ENCODE measurements at regions of chr4 and their contacts with region 1.

Region 1: GRCh38 chr4:98688411-98689290 is 30.2 kb upstream of the TSPAN5 start:
- DNase-seq: peak; percentile 63
- H3K4me3 Mint-ChIP-seq: no peak overlapping the region
- H3K27ac Mint-ChIP-seq: peak overlapping the region; percentile 72
- H3K4me1 Mint-ChIP-seq: peaks cover 45% of the 10 kb centered on the region
- H3K27me3 Mint-ChIP-seq: no peaks in the 10 kb centered on the region

Region 2: GRCh38 chr4:98467627-98468072 is 221.0 kb before region 1 on chr4:
- CTCF ChIA-PET with region 1: interaction called, 15 read pairs
- POLR2A ChIA-PET with region 1: no interaction called
- intact Hi-C with region 1: no loop called
- DNase-seq: peak; percentile 82
- H3K4me3 Mint-ChIP-seq: peak overlapping the region; percentile 67
- H3K27ac Mint-ChIP-seq: no peak overlapping the region
- H3K4me1 Mint-ChIP-seq: peaks cover 27% of the 10 kb centered on the region
- H3K27me3 Mint-ChIP-seq: no peaks in the 10 kb centered on the region

Region 3: GRCh38 chr4:98648602-98649001 is 40.0 kb before region 1 on chr4:
- CTCF ChIA-PET with region 1: no interaction called
- POLR2A ChIA-PET with region 1: no interaction called
- intact Hi-C with region 1: no loop called
- DNase-seq: no peak
- H3K4me3 Mint-ChIP-seq: no peak overlapping the region
- H3K27ac Mint-ChIP-seq: no peak overlapping the region
- H3K4me1 Mint-ChIP-seq: peaks cover 59% of the 10 kb centered on the region
- H3K27me3 Mint-ChIP-seq: no peaks in the 10 kb centered on the region

Region 4: GRCh38 chr4:98670186-98670585 is 18.5 kb before region 1 on chr4:
- CTCF ChIA-PET with region 1: no interaction called
- POLR2A ChIA-PET with region 1: no interaction called
- intact Hi-C with region 1: loop called (anchors 2 kb)
- DNase-seq: no peak
- H3K4me3 Mint-ChIP-seq: no peak overlapping the region
- H3K27ac Mint-ChIP-seq: no peak overlapping the region
- H3K4me1 Mint-ChIP-seq: peaks cover 20% of the 10 kb centered on the region
- H3K27me3 Mint-ChIP-seq: peaks cover 4% of the 10 kb centered on the region

Region 5: GRCh38 chr4:98706200-98706813 is 17.7 kb after region 1 on chr4:
- CTCF ChIA-PET with region 1: no interaction called
- POLR2A ChIA-PET with region 1: no interaction called
- intact Hi-C with region 1: loop called (anchors 1 kb)
- DNase-seq: peak; percentile 34
- H3K4me3 Mint-ChIP-seq: peak overlapping the region; percentile 51
- H3K27ac Mint-ChIP-seq: peak overlapping the region; percentile 69
- H3K4me1 Mint-ChIP-seq: peaks cover 26% of the 10 kb centered on the region
- H3K27me3 Mint-ChIP-seq: no peaks in the 10 kb centered on the region

Region 6: GRCh38 chr4:98864560-98864959 is 175.9 kb after region 1 on chr4:
- CTCF ChIA-PET with region 1: no interaction called
- POLR2A ChIA-PET with region 1: no interaction called
- intact Hi-C with region 1: loop called (anchors 1 kb)
- DNase-seq: peak; percentile 79
- H3K4me3 Mint-ChIP-seq: no peak overlapping the region
- H3K27ac Mint-ChIP-seq: peak overlapping the region; percentile 42
- H3K4me1 Mint-ChIP-seq: peaks cover 13% of the 10 kb centered on the region
- H3K27me3 Mint-ChIP-seq: no peaks in the 10 kb centered on the region

Region 7: GRCh38 chr4:99462875-99463464 is 774.3 kb after region 1 on chr4:
- CTCF ChIA-PET with region 1: no interaction called
- POLR2A ChIA-PET with region 1: no interaction called
- intact Hi-C with region 1: no loop called
- DNase-seq: peak; percentile 63
- H3K4me3 Mint-ChIP-seq: no peak overlapping the region
- H3K27ac Mint-ChIP-seq: no peak overlapping the region
- H3K4me1 Mint-ChIP-seq: no peaks in the 10 kb centered on the region
- H3K27me3 Mint-ChIP-seq: peaks cover 5% of the 10 kb centered on the region